ENCODE measurements at regions of chr17 and their contacts with region 1.

Region 1: DNA sequence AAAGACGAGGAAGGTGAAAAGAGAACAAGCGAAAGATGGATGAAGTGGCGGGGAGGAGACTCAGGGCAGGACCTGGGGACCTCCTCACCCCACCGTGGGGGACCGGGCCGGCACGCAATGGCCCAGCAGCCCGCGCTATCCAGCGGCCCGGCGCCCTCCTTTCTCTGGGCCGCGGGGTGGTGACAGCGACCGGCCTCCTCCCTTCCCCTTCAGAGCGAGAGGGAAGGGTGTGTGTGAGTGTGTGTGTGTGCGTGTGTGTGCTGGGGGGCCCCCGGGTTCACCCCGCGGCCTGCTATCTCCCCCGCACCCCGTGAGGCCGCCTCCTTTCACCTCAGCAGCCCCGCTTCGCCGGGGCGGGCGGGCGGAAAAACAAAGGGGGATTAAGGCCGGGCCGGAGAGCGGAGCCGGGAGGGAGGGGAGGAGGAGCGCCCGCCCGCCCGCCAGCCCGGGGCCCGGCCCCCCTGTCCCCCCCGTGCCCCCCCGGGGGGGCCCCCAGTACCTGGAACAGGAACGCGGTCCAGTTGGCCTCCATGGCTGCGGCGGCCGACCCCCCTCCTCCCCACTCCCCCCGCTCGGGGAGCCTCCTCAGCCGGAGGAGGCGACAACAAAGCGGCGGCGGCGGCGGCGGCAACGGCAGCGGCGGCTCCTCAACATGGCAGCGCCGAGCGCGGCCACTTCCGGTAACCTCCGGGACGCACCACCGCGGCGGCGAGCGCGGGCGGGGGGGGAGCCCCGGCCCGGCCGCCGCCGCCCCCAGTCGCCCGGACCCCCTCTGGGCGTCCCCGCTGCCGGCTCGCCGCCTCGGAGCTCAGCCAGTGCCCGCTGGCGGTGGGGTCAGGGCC is at the start of gene VEZF1:
- DNase-seq: no peak
- ATAC-seq: peak; percentile 73
- H3K4me3 ChIP-seq: peak within 1 kb of the TSS; percentile 87
- H3K27ac ChIP-seq: peak within 1 kb of the TSS; percentile 56
- H3K4me1 ChIP-seq: peaks cover 5% of the 10 kb centered on the region
- H3K27me3 ChIP-seq: no peaks in the 10 kb centered on the region
- CTCF ChIP-seq: no peak
- EP300 ChIP-seq: no peak
- POLR2A ChIP-seq: peak; percentile 13; the same call in 1 of the 2 replicates
- RAD21 ChIP-seq: no peak
- polyA plus RNA-seq, gene VEZF1: 9.5 to 11.7 TPM

Region 2: DNA sequence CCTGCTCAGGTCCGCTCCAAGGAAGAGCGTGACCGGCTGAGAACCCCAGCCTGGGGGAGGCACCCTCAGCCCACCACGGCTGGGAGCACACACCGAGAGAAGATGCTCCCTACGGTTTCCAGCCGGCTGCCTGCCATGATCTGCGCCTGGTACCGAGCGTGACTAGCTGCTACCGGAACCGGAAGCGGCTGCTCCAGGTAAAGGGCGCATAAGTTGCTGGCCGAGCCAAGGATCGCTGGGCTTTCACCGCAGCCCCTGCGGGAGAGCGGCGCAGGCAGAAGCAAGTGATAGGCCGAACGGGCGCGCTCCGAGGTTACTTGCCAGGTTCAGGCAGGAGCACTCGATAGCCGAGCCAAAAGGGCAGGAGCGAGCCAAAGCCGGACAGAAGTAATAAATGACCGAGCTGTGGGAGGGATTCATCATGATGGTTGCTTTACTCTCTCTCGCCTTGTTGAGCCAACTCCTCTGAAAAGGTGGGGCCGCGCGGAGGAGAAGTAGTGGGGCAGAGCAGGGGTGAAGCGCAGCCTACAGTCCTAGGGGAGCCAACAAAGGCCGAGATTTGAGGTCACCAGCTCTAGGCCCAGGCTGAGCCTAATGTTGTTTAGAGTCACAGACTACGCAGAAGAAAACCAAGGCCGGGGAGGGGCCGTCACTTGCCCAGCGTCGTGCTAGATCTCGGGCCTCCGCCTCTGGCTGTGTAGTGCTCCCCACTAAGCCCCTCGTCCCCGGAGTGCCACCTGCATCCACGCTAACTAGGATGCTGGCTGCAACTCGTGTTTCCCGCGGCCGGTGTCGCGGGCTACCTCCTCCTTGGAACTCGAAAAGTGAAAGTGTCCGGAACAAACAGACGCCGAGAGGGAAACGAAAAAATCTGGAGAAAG is 137.7 kb before region 1 on chr17 and contains the start of gene MRPS23:
- CTCF ChIA-PET with region 1: interaction called, 708 read pairs
- POLR2A ChIA-PET with region 1: interaction called, 10 read pairs
- RAD21 ChIA-PET with region 1: interaction called, 239 read pairs
- SMC1A ChIA-PET with region 1: interaction called, 341 read pairs
- in situ Hi-C with region 1: no loop called
- intact Hi-C with region 1: no loop called
- DNase-seq: peak; percentile 92
- ATAC-seq: peak; percentile 97
- H3K4me3 ChIP-seq: peak within 1 kb of the TSS; percentile 96
- H3K27ac ChIP-seq: peak within 1 kb of the TSS; percentile 74
- H3K4me1 ChIP-seq: peaks cover 8% of the 10 kb centered on the region
- H3K27me3 ChIP-seq: no peaks in the 10 kb centered on the region
- CTCF ChIP-seq: no peak
- EP300 ChIP-seq: peak; percentile 6 to 46; a peak in 1 of 4 replicates
- POLR2A ChIP-seq: peak; percentile 95
- RAD21 ChIP-seq: no peak
- polyA plus RNA-seq, gene MRPS23: 186 to 237 TPM

Region 3: GRCh38 chr17:57861000-57861789 is 126.6 kb before region 1 on chr17:
- CTCF ChIA-PET with region 1: interaction called, 708 read pairs
- POLR2A ChIA-PET with region 1: interaction called, 6 read pairs
- RAD21 ChIA-PET with region 1: interaction called, 239 read pairs
- SMC1A ChIA-PET with region 1: interaction called, 341 read pairs
- in situ Hi-C with region 1: no loop called
- intact Hi-C with region 1: no loop called
- DNase-seq: no peak
- ATAC-seq: peak; percentile 67
- H3K4me3 ChIP-seq: peak overlapping the region; percentile 38; the same call in 1 of the 2 replicates
- H3K27ac ChIP-seq: no peak overlapping the region
- H3K4me1 ChIP-seq: peaks cover 3% of the 10 kb centered on the region; the same call in 1 of the 2 replicates
- H3K27me3 ChIP-seq: no peaks in the 10 kb centered on the region; a peak in 2 of 4 replicates
- CTCF ChIP-seq: no peak
- EP300 ChIP-seq: no peak
- POLR2A ChIP-seq: no peak
- RAD21 ChIP-seq: no peak

Region 4: GRCh38 chr17:57902800-57903759 is 84.7 kb before region 1 on chr17:
- CTCF ChIA-PET with region 1: interaction called, 134 read pairs
- POLR2A ChIA-PET with region 1: interaction called, 21 read pairs
- RAD21 ChIA-PET with region 1: interaction called, 27 read pairs
- SMC1A ChIA-PET with region 1: interaction called, 67 read pairs
- in situ Hi-C with region 1: loop called (anchors 10 kb)
- intact Hi-C with region 1: loop called (anchors 1 kb)
- DNase-seq: peak; percentile 89
- ATAC-seq: peak; percentile 82
- H3K4me3 ChIP-seq: peak overlapping the region; percentile 35; the same call in 1 of the 2 replicates
- H3K27ac ChIP-seq: peak overlapping the region; percentile 85
- H3K4me1 ChIP-seq: peaks cover 58% of the 10 kb centered on the region
- H3K27me3 ChIP-seq: no peaks in the 10 kb centered on the region
- CTCF ChIP-seq: no peak
- EP300 ChIP-seq: peak; percentile 53 to 77; a peak in 3 of 4 replicates
- POLR2A ChIP-seq: 0 out of 2 replicates have a peak, but pooled peaks have one; percentile 27
- RAD21 ChIP-seq: peak; percentile 26; the same call in 1 of the 2 replicates

Region 5: DNA sequence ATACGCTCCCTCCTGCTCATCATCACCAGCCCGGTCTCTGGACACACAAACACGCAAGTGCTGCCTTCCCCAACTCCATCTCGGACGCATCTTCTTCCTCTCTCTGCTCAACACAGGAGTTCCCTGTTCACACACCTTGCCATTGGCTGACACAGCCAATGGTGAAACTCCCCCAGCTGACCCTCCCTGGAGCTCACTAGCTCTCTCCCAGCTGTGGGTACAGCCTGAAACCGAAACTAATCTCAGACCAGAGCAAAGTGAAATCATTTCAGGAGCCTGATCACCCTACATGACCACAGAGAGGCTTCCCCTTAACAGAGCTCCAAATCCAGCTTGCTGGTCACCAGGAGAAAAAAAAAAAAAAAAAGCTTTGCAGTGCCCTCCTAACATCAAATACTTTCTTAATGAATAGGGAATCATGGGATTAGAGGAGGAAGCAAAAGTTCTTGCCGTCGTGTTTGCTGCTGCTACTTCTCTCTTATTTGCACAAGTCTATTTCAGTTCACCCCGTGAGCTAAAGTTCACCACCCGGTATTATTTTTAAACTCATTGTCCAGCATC is 40.9 kb before region 1 on chr17:
- CTCF ChIA-PET with region 1: interaction called, 22 read pairs
- POLR2A ChIA-PET with region 1: interaction called, 7 read pairs
- RAD21 ChIA-PET with region 1: interaction called, 55 read pairs
- SMC1A ChIA-PET with region 1: interaction called, 114 read pairs
- in situ Hi-C with region 1: no loop called
- intact Hi-C with region 1: loop called (anchors 5 kb)
- DNase-seq: peak; percentile 73
- ATAC-seq: peak; percentile 90
- H3K4me3 ChIP-seq: peak overlapping the region; percentile 28; the same call in 1 of the 2 replicates
- H3K27ac ChIP-seq: no peak overlapping the region
- H3K4me1 ChIP-seq: peaks cover 54% of the 10 kb centered on the region
- H3K27me3 ChIP-seq: no peaks in the 10 kb centered on the region
- CTCF ChIP-seq: no peak
- EP300 ChIP-seq: no peak
- POLR2A ChIP-seq: no peak
- RAD21 ChIP-seq: no peak

Region 6: GRCh38 chr17:57975044-57975443 is 12.8 kb before region 1 on chr17:
- CTCF ChIA-PET with region 1: interaction called, 195 read pairs
- POLR2A ChIA-PET with region 1: no interaction called
- RAD21 ChIA-PET with region 1: interaction called, 10 read pairs
- SMC1A ChIA-PET with region 1: interaction called, 72 read pairs
- in situ Hi-C with region 1: no loop called
- intact Hi-C with region 1: no loop called
- DNase-seq: no peak
- ATAC-seq: no peak
- H3K4me3 ChIP-seq: no peak overlapping the region
- H3K27ac ChIP-seq: no peak overlapping the region
- H3K4me1 ChIP-seq: no peaks in the 10 kb centered on the region
- H3K27me3 ChIP-seq: no peaks in the 10 kb centered on the region
- CTCF ChIP-seq: no peak
- EP300 ChIP-seq: no peak
- POLR2A ChIP-seq: no peak
- RAD21 ChIP-seq: no peak

Region 7: GRCh38 chr17:58032691-58033415 is 45.1 kb after region 1 on chr17:
- CTCF ChIA-PET with region 1: no interaction called
- POLR2A ChIA-PET with region 1: no interaction called
- RAD21 ChIA-PET with region 1: no interaction called
- SMC1A ChIA-PET with region 1: no interaction called
- in situ Hi-C with region 1: no loop called
- intact Hi-C with region 1: no loop called
- DNase-seq: no peak
- ATAC-seq: no peak
- H3K4me3 ChIP-seq: no peak overlapping the region
- H3K27ac ChIP-seq: no peak overlapping the region
- H3K4me1 ChIP-seq: no peaks in the 10 kb centered on the region
- H3K27me3 ChIP-seq: 0 out of 4 replicates have a peak, but pooled peaks cover 0 to 2% of the 10 kb centered on the region in 2 experiments
- CTCF ChIP-seq: no peak
- EP300 ChIP-seq: no peak
- POLR2A ChIP-seq: no peak
- RAD21 ChIP-seq: no peak

Measured in GM12878 (cell line).